Thyroid gland (tissue), 4 donors: ENCODE measurements at regions of chr20 and their contacts with region 1.

Region 1: DNA sequence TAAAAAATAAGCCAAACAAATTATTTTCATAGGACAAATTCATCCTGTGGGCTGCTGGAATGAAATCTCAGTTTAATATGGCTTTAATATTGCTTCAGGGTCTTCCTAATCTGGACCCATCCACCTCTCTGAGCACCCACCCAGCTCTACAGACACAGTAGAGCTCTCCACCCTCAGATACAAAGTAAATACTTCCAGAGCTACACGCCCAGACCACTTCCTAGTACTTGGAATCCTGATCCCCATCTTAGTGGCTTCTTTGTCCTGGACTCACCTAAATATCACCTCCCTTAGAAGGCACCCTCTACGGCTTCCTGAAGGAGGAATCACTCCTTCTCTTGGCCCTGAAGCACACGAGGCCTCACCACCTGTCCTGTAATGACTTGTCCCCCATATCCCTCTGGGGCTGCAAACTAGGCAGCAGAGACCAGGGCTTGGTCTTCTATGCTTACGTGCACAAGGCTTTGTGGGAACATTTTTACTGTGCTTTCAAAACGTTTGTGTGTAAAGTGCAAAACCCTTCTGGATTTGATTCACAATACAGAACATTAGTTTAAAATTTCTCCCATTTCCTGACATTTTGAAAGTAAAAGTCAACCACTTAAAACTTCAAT is 2.5 kb downstream of the CTCFL start:
- DNase-seq: no peak
- H3K4me3 ChIP-seq: no peak overlapping the region
- H3K27ac ChIP-seq: no peak overlapping the region
- H3K4me1 ChIP-seq: no peaks in the 10 kb centered on the region
- H3K27me3 ChIP-seq: no peaks in the 10 kb centered on the region
- CTCF ChIP-seq: no peak
- POLR2A ChIP-seq: no peak

Region 2: DNA sequence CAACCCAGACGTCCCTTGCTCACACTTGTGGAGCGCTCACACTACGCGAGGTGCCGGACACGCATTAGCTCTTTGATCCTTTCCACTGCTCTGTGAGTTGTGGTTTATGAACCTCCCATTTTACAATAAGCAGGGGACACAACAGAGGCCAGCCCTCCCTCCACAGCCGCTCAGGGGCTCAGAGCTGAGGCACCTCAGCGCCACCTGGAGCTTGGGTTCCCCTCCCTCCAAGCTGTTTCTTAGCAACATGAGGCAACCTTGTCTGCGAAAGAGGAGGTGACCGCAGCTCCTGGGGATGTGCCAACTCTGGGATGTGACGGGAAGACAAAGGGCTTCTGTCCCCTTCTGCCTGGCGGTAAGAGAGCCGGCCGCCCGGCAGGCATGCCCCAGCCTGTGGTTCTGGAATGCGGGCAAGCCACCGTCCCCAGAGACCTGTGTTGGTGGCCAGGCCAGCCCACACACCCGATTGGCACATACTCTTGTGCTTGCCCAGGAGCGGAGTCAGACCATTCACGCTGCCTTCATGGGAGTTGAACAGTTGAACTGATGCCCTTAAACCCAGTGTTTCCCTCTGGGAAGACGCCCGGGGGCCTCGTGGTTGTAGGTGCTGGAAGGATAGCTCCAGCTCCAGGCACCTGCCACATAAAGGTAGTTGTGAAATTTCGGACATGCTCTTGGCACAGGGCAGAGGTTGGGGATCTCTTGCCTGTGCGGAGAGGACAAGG is 86.8 kb before region 1 on chr20:
- intact Hi-C with region 1: no loop called
- DNase-seq: peak; percentile 72 to 76
- H3K4me3 ChIP-seq: no peak overlapping the region
- H3K27ac ChIP-seq: no peak overlapping the region
- H3K4me1 ChIP-seq: peaks cover 27 to 34% of the 10 kb centered on the region in 2 donors
- H3K27me3 ChIP-seq: no peaks in the 10 kb centered on the region
- CTCF ChIP-seq: no peak
- POLR2A ChIP-seq: no peak

Region 3: DNA sequence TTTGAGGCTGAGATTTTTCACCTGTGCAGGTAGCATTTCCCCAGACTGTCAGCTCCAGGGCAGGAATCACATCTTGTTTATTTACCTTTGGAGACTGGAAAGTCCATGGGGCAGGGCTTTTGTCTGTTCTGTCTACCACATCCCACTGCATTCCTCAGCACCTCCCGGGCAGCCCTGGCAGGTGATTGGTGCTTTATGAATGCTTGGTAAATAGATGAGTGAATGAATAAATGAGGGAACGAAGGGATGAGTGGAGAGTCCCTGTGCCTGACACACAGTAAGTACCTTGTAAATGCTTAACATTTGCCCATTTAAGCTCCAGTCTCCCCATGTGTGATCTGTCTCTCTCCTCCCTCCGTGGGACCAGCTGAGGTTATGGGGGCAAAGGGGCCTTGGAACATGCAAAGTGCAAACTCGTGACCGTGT is 257.0 kb after region 1 on chr20:
- intact Hi-C with region 1: no loop called
- DNase-seq: no peak
- H3K4me3 ChIP-seq: no peak overlapping the region
- H3K27ac ChIP-seq: no peak overlapping the region
- H3K4me1 ChIP-seq: no peaks in the 10 kb centered on the region
- H3K27me3 ChIP-seq: no peaks in the 10 kb centered on the region
- CTCF ChIP-seq: no peak
- POLR2A ChIP-seq: no peak

Region 4: DNA sequence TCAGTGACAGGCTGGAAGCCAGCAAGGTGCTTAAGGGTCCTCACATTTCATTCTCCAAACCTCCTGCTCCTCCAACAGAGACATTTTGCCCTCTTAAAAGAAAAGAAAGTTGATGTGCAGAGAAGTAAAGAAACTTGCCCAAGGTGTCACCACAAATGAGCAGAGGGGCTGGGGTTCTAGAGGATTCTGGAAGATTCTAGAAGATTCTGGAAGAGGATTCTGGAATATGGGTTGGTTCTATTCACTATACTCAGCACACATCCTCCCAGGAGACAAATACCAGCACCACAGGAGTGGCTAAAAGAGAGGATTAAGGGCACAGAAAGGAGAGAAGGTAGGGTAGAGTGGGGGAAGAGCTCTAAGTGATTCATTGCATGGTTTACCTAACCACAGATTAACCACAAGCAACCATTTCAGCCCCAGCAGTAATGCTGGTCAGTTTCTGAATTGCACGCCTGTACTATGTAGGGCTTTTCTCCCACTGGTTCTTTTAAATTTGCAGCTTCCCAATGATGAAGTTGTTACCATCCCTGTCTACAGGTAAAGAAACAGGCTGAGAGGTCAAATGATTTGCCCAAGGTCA is 379.9 kb after region 1 on chr20:
- intact Hi-C with region 1: no loop called
- DNase-seq: no peak
- H3K4me3 ChIP-seq: no peak overlapping the region
- H3K27ac ChIP-seq: no peak overlapping the region
- H3K4me1 ChIP-seq: no peaks in the 10 kb centered on the region
- H3K27me3 ChIP-seq: no peaks in the 10 kb centered on the region
- CTCF ChIP-seq: no peak
- POLR2A ChIP-seq: no peak

Region 5: DNA sequence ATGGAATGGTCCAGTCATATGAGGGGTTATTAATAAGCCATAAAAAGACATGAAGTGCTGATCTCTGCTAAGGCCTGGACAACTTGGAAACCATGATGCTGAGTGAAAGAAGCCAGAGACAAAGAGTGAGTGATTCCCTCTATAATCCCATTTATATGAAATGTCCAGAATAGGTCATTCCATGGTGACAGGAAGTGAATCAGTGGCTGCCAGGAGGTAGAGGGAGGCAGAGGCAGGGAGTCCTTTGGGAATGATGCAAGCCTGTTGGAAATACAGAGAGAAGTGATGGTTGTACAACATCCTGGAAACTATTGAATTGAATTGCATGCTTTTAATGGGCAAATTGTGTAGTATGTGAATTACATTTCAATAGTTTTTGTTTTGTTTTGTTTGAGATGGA is 679.6 kb after region 1 on chr20:
- intact Hi-C with region 1: loop called (anchors 5 kb)
- DNase-seq: no peak
- H3K4me3 ChIP-seq: no peak overlapping the region
- H3K27ac ChIP-seq: no peak overlapping the region
- H3K4me1 ChIP-seq: no peaks in the 10 kb centered on the region
- H3K27me3 ChIP-seq: no peaks in the 10 kb centered on the region
- CTCF ChIP-seq: no peak
- POLR2A ChIP-seq: no peak